ENCODE measurements at regions of chr11 and their contacts with region 1.

Region 1: DNA sequence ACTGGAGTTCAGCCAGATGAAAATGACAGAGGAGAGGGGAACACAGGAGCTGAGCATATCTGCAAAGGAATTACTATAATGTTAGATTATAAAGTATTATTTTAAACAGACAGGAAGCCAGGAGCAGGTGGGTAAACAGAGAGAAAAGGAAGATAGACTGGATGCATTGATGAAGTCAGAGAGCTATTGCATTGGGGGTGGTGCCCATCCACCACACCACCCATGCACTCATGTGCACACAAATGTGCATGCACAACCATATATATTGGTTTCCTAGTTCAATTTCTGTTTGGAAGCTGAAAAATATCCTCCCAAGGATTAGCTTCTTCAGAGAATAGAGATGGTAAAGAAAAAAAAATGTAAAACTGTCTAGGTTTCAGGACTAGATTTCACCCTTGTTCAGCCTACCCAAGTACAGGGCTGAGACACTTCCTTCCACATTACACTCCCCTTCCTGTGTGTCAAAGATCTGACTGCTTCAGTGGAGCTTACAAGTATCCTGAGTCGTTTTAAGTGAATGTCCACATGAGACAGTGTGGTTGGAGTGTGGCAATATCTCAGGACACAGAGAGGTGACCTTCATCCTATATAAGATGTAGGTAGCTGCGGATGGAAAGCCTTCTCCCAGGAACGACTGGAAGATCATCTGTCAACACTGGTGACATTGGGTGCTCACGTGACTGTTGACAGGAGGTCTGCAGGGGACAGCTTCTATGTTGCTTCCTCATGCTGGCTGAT is 12.2 kb upstream of the SMPD1 start:
- DNase-seq: peak in 1 of 9 experiments; percentile 45
- ATAC-seq: peak; percentile 81
- H3K4me3 ChIP-seq: peak overlapping the region in 1 of 2 experiments; percentile 17
- H3K4me3 Mint-ChIP-seq: peak overlapping the region; percentile 58
- H3K27ac ChIP-seq: peak overlapping the region in 1 of 2 experiments; percentile 7
- H3K27ac Mint-ChIP-seq: peak overlapping the region; percentile 86
- H3K4me1 ChIP-seq: peaks cover 18% of the 10 kb centered on the region
- H3K4me1 Mint-ChIP-seq: peaks cover 28% of the 10 kb centered on the region
- H3K27me3 ChIP-seq: no peaks in the 10 kb centered on the region
- H3K27me3 Mint-ChIP-seq: no peaks in the 10 kb centered on the region
- CTCF ChIP-seq: no peak

Region 2: DNA sequence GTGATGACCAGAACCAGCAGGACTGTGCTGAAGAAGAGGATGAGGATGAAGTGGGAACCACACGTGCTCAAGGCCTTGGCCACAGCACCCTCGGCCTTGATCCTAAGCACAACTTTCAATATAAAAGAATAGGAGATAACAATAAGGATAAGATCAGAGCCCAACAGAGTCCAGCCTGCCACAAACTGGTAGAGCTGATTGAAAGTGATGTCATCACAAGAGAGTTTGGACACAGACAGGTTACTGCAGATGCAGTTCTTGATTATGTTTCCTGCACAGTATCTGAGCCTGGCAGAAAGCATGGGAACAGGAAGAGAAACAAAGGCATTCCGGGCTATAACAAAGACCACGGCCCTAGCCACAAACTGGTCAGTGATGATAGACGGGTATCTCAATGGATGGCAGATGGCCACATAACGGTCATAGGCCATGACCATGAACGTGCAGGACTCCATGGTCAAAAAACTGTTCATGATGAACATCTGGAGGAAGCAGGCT is 375.8 kb before region 1 on chr11:
- CTCF ChIA-PET with region 1: no interaction called
- POLR2A ChIA-PET with region 1: no interaction called
- intact Hi-C with region 1: no loop called
- DNase-seq: no peak
- ATAC-seq: no peak
- H3K4me3 ChIP-seq: no peak overlapping the region
- H3K4me3 Mint-ChIP-seq: no peak overlapping the region
- H3K27ac ChIP-seq: no peak overlapping the region
- H3K27ac Mint-ChIP-seq: no peak overlapping the region
- H3K4me1 ChIP-seq: no peaks in the 10 kb centered on the region
- H3K4me1 Mint-ChIP-seq: no peaks in the 10 kb centered on the region
- H3K27me3 ChIP-seq: no peaks in the 10 kb centered on the region
- H3K27me3 Mint-ChIP-seq: peaks cover 20% of the 10 kb centered on the region
- CTCF ChIP-seq: no peak

Region 3: DNA sequence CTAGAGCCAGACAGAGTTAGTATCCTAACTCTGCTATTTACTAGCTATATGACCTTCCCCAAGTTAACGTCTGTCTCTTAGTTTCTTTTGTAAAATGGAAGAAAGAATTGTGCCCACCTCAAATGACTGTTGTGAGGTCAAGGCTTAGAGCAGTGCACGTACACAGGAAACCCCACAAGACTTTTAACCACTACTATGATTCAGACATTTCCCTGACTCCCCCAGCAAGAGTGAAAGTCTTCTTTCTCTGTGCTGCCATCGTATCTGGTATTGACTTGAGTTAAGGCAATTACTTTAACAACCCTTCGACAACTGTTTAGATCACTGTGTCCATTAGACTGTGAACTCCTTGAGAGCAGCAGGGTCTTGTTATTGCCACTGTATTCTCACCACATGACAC is 181.7 kb before region 1 on chr11:
- CTCF ChIA-PET with region 1: no interaction called
- POLR2A ChIA-PET with region 1: no interaction called
- intact Hi-C with region 1: no loop called
- DNase-seq: peak in 2 of 9 experiments; percentile 43 to 53
- ATAC-seq: peak; percentile 69
- H3K4me3 ChIP-seq: no peak overlapping the region
- H3K4me3 Mint-ChIP-seq: no peak overlapping the region
- H3K27ac ChIP-seq: peak overlapping the region in 1 of 2 experiments; percentile 19
- H3K27ac Mint-ChIP-seq: no peak overlapping the region
- H3K4me1 ChIP-seq: peaks cover 5% of the 10 kb centered on the region
- H3K4me1 Mint-ChIP-seq: peaks cover 15% of the 10 kb centered on the region
- H3K27me3 ChIP-seq: no peaks in the 10 kb centered on the region
- H3K27me3 Mint-ChIP-seq: no peaks in the 10 kb centered on the region
- CTCF ChIP-seq: no peak

Region 4: GRCh38 chr11:6389921-6390724 is 12.1 kb after region 1 on chr11 and contains the start of gene SMPD1:
- CTCF ChIA-PET with region 1: interaction called, 53 read pairs
- POLR2A ChIA-PET with region 1: interaction called, 9 read pairs
- intact Hi-C with region 1: loop called in 1 of 2 experiments (anchors 1 kb)
- DNase-seq: peak; percentile 90 to 97 (median 94)
- ATAC-seq: peak; percentile 88
- H3K4me3 ChIP-seq: peak within 1 kb of the TSS; percentile 84 to 90
- H3K4me3 Mint-ChIP-seq: peak within 1 kb of the TSS; percentile 93
- H3K27ac ChIP-seq: peak within 1 kb of the TSS; percentile 85 to 95
- H3K27ac Mint-ChIP-seq: peak within 1 kb of the TSS; percentile 98
- H3K4me1 ChIP-seq: peaks cover 52% of the 10 kb centered on the region
- H3K4me1 Mint-ChIP-seq: peaks cover 68% of the 10 kb centered on the region
- H3K27me3 ChIP-seq: no peaks in the 10 kb centered on the region
- H3K27me3 Mint-ChIP-seq: no peaks in the 10 kb centered on the region
- CTCF ChIP-seq: no peak
- total RNA-seq, gene SMPD1: 53.4 to 53.7 TPM

Region 5: GRCh38 chr11:6419009-6419631 is 41.0 kb after region 1 on chr11 and contains the start of gene APBB1:
- CTCF ChIA-PET with region 1: interaction called, 28 read pairs
- POLR2A ChIA-PET with region 1: interaction called, 23 read pairs
- intact Hi-C with region 1: loop called (anchors 1 kb)
- DNase-seq: peak; percentile 49 to 88 (median 77)
- ATAC-seq: peak; percentile 69
- H3K4me3 ChIP-seq: peak within 1 kb of the TSS; percentile 51 to 81
- H3K4me3 Mint-ChIP-seq: peak within 1 kb of the TSS; percentile 84
- H3K27ac ChIP-seq: peak within 1 kb of the TSS; percentile 48 to 82
- H3K27ac Mint-ChIP-seq: peak within 1 kb of the TSS; percentile 89
- H3K4me1 ChIP-seq: peaks cover 46% of the 10 kb centered on the region
- H3K4me1 Mint-ChIP-seq: peaks cover 10% of the 10 kb centered on the region
- H3K27me3 ChIP-seq: no peaks in the 10 kb centered on the region
- H3K27me3 Mint-ChIP-seq: peaks cover 3% of the 10 kb centered on the region
- CTCF ChIP-seq: no peak
- total RNA-seq, gene APBB1: 130 to 147 TPM

Region 6: GRCh38 chr11:6452219-6452618 is 74.1 kb after region 1 on chr11:
- CTCF ChIA-PET with region 1: interaction called, 733 read pairs
- POLR2A ChIA-PET with region 1: no interaction called
- intact Hi-C with region 1: no loop called
- DNase-seq: no peak
- ATAC-seq: no peak
- H3K4me3 ChIP-seq: no peak overlapping the region
- H3K4me3 Mint-ChIP-seq: no peak overlapping the region
- H3K27ac ChIP-seq: no peak overlapping the region
- H3K27ac Mint-ChIP-seq: no peak overlapping the region
- H3K4me1 ChIP-seq: no peaks in the 10 kb centered on the region
- H3K4me1 Mint-ChIP-seq: no peaks in the 10 kb centered on the region
- H3K27me3 ChIP-seq: no peaks in the 10 kb centered on the region
- H3K27me3 Mint-ChIP-seq: no peaks in the 10 kb centered on the region
- CTCF ChIP-seq: no peak

Region 7: GRCh38 chr11:6489306-6489705 is 111.2 kb after region 1 on chr11:
- CTCF ChIA-PET with region 1: interaction called, 30 read pairs
- POLR2A ChIA-PET with region 1: interaction called, 3 read pairs
- intact Hi-C with region 1: no loop called
- DNase-seq: no peak
- ATAC-seq: no peak
- H3K4me3 ChIP-seq: no peak overlapping the region
- H3K4me3 Mint-ChIP-seq: no peak overlapping the region
- H3K27ac ChIP-seq: no peak overlapping the region
- H3K27ac Mint-ChIP-seq: no peak overlapping the region
- H3K4me1 ChIP-seq: no peaks in the 10 kb centered on the region
- H3K4me1 Mint-ChIP-seq: peaks cover 4% of the 10 kb centered on the region
- H3K27me3 ChIP-seq: no peaks in the 10 kb centered on the region
- H3K27me3 Mint-ChIP-seq: no peaks in the 10 kb centered on the region
- CTCF ChIP-seq: no peak

Region 8: DNA sequence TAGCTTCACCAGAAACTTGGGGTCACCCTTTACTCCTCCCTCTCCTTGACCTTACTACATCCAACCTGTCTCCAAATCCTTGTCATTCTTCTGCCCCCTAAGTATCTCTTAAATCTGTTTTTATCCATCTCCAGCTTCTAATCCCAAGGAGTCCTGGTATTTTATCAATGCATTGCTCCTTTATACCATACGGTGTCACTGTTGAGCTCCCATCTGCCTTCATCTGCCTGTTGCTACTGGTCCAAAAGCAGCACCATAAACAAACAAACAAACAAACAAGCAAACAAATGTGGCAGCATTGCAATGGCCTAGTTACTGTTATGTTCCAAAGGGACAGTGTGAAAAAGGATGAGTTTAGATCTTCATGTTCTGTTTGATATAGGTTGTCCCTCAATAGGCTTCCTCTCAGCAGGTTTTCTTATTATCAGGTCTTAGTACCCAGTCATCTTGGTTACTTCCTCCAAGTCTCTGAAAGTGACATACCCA is 153.2 kb after region 1 on chr11:
- CTCF ChIA-PET with region 1: interaction called, 12 read pairs
- POLR2A ChIA-PET with region 1: no interaction called
- intact Hi-C with region 1: no loop called
- DNase-seq: peak in 3 of 9 experiments; percentile 14 to 68 (median 56)
- ATAC-seq: peak; percentile 83
- H3K4me3 ChIP-seq: no peak overlapping the region
- H3K4me3 Mint-ChIP-seq: no peak overlapping the region
- H3K27ac ChIP-seq: no peak overlapping the region
- H3K27ac Mint-ChIP-seq: no peak overlapping the region
- H3K4me1 ChIP-seq: peaks cover 4% of the 10 kb centered on the region
- H3K4me1 Mint-ChIP-seq: peaks cover 7% of the 10 kb centered on the region
- H3K27me3 ChIP-seq: no peaks in the 10 kb centered on the region
- H3K27me3 Mint-ChIP-seq: no peaks in the 10 kb centered on the region
- CTCF ChIP-seq: peak; percentile 84

Region 9: GRCh38 chr11:6695377-6695776 is 317.3 kb after region 1 on chr11:
- CTCF ChIA-PET with region 1: no interaction called
- POLR2A ChIA-PET with region 1: no interaction called
- intact Hi-C with region 1: no loop called
- DNase-seq: no peak
- ATAC-seq: no peak
- H3K4me3 ChIP-seq: no peak overlapping the region
- H3K4me3 Mint-ChIP-seq: no peak overlapping the region
- H3K27ac ChIP-seq: no peak overlapping the region
- H3K27ac Mint-ChIP-seq: peak overlapping the region; percentile 60
- H3K4me1 ChIP-seq: peaks cover 13% of the 10 kb centered on the region
- H3K4me1 Mint-ChIP-seq: peaks cover 22% of the 10 kb centered on the region
- H3K27me3 ChIP-seq: no peaks in the 10 kb centered on the region
- H3K27me3 Mint-ChIP-seq: no peaks in the 10 kb centered on the region
- CTCF ChIP-seq: no peak

Region 10: GRCh38 chr11:6757373-6757967 is 379.4 kb after region 1 on chr11:
- CTCF ChIA-PET with region 1: interaction called, 13 read pairs
- POLR2A ChIA-PET with region 1: no interaction called
- intact Hi-C with region 1: loop called (anchors 5 to 10 kb)
- DNase-seq: peak; percentile 30 to 82 (median 65)
- ATAC-seq: peak; percentile 80
- H3K4me3 ChIP-seq: no peak overlapping the region
- H3K4me3 Mint-ChIP-seq: no peak overlapping the region
- H3K27ac ChIP-seq: no peak overlapping the region
- H3K27ac Mint-ChIP-seq: no peak overlapping the region
- H3K4me1 ChIP-seq: no peaks in the 10 kb centered on the region
- H3K4me1 Mint-ChIP-seq: peaks cover 15% of the 10 kb centered on the region
- H3K27me3 ChIP-seq: no peaks in the 10 kb centered on the region
- H3K27me3 Mint-ChIP-seq: no peaks in the 10 kb centered on the region
- CTCF ChIP-seq: peak; percentile 74